Activated CD8-positive, alpha-beta T cell treated with anti-CD3 and anti-CD28 coated beads, Interleukin-2, amount 10 ng/mL, durations not matched to agents 7 days and 5 days (primary cell): ENCODE measurements at regions of chr12 and their contacts with region 1.

Region 1: DNA sequence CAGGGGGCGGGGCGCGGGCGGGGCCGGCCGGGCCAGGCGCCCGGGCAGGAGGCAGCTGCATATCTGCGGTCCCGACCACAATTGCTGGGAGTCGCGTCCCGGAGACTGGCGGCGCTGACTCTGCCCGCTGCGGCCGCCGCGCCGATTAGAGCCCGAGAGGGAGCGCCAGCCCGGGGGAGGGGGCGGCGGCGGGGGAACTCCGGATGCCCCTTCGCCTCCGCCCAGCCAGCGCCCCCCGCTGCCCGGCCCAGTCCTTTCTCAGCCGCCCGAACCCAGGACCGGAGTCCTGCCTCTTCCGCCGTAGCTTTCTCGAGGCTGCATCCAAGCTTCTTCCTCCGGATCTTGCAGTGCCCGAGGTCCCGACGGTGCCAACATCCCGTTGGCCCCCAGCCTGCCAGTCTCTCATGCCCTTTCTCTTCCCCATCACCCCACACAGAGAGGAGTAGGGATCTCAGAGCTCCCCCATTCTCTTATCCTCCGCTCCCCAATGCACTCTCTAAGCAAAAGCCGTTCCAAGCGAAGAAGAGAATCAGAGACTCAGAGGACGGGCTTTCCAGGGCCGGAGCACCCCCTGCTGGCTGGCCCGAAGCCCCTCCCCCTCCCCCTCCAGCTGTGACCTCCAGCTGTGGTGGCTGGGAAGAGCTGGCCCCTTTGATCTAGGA is 8.8 kb upstream of the SP7 start:
- DNase-seq: peak; percentile 78
- ATAC-seq: peak; percentile 85
- H3K4me3 Mint-ChIP-seq: peak overlapping the region; percentile 92
- H3K27ac Mint-ChIP-seq: peak overlapping the region; percentile 91
- H3K4me1 Mint-ChIP-seq: peaks cover 17% of the 10 kb centered on the region
- H3K27me3 Mint-ChIP-seq: peaks cover 9% of the 10 kb centered on the region

Region 2: DNA sequence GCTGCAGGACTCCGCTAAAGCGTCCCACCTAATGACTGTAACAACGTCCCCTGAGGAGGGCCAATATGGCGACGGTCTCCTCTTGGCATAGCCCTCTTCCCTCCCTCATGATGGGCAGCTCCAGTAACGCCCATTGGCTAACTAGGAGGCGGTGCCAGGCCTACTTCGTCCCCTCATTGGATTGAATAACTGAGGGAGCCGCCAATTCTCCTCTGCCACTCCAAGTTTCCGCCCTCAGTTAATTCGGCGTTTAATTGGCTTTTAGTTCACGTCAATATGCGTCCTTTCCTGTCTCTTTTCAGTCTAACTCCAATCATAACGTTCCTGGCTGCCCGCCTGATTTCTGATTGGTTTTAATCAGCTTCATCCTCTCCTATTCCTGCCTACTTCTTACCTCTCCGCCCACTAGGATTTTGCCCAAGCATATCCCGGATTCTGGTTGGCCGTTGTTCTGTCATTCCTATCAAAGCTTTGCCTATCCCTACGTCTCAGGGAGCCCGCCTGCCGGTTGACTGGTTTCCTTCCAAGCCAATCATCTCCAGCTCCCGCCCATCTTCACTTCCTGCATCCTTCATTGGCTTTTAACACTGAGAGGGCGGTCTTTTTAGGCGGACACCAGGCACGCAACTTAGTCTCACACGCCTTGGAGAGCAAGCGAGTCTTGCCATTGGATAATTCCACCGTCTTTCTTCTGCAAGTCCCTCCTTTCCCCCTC is 34.6 kb after region 1 on chr12:
- CTCF ChIA-PET with region 1: interaction called, 15 read pairs
- POLR2A ChIA-PET with region 1: interaction called, 7 read pairs
- DNase-seq: peak; percentile 99
- ATAC-seq: peak; percentile 80
- H3K4me3 Mint-ChIP-seq: no peak overlapping the region
- H3K27ac Mint-ChIP-seq: no peak overlapping the region
- H3K4me1 Mint-ChIP-seq: peaks cover 35% of the 10 kb centered on the region
- H3K27me3 Mint-ChIP-seq: no peaks in the 10 kb centered on the region

Region 3: DNA sequence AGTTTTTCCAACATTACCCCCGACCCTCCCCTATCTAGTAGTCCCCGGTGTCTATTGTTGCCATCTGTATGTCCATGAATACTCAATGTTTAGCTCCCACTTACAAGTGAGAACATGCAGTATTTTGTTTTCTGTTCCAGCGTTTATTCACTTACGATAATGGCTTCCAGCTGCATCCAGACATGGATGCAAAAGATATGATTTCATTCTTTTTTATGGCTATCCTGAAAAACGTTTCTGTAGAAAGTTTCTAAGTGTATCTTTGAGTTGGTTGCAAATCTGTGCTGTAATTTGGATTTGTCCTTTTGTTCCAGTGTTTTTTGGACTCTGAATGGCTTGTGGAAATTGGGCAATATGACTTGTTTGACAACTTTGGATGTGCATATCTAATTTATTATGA is 46.8 kb after region 1 on chr12:
- CTCF ChIA-PET with region 1: interaction called, 10 read pairs
- POLR2A ChIA-PET with region 1: interaction called, 3 read pairs
- DNase-seq: no peak
- ATAC-seq: no peak
- H3K4me3 Mint-ChIP-seq: no peak overlapping the region
- H3K27ac Mint-ChIP-seq: no peak overlapping the region
- H3K4me1 Mint-ChIP-seq: peaks cover 36% of the 10 kb centered on the region
- H3K27me3 Mint-ChIP-seq: no peaks in the 10 kb centered on the region

Region 4: GRCh38 chr12:53402871-53403270 is 57.9 kb after region 1 on chr12:
- CTCF ChIA-PET with region 1: no interaction called
- POLR2A ChIA-PET with region 1: no interaction called
- DNase-seq: no peak
- ATAC-seq: no peak
- H3K4me3 Mint-ChIP-seq: no peak overlapping the region
- H3K27ac Mint-ChIP-seq: no peak overlapping the region
- H3K4me1 Mint-ChIP-seq: peaks cover 8% of the 10 kb centered on the region
- H3K27me3 Mint-ChIP-seq: no peaks in the 10 kb centered on the region

Region 5: DNA sequence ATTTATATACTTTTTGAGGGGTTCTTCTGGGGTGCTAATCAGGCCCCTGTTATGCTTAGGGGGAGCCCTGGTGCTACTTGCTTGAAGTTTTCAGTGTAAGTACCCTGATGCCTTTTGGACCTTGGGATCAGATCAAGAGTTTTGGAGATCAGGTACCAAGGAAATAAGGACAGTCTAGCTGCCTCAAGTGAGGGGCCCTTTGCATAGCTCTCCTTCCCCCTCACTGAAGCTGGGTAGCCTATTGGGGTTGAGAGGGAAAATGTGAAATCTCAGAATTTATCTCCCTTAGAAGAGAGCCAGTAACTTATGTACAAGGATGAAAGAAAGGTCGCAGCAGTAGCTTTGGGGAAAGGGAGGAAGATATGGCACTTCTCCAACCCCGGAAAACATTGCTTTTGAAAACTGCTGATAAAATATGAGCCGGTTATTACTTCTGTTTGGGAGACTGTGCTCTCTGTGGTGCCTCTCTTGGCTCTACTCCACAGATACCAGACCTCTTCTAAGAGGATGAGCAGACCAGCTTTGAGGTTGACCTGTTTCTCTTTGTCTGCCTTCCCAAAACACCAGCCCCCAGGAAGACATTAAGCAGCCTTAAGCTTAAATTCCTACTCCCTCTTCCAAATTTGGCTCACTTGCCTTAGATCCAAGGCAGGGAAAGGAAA is 69.9 kb after region 1 on chr12:
- CTCF ChIA-PET with region 1: interaction called, 36 read pairs
- POLR2A ChIA-PET with region 1: no interaction called
- DNase-seq: no peak
- ATAC-seq: no peak
- H3K4me3 Mint-ChIP-seq: no peak overlapping the region
- H3K27ac Mint-ChIP-seq: no peak overlapping the region
- H3K4me1 Mint-ChIP-seq: peaks cover 24% of the 10 kb centered on the region
- H3K27me3 Mint-ChIP-seq: no peaks in the 10 kb centered on the region

Region 6: GRCh38 chr12:53459097-53459496 is 114.1 kb after region 1 on chr12:
- CTCF ChIA-PET with region 1: no interaction called
- POLR2A ChIA-PET with region 1: no interaction called
- DNase-seq: no peak
- ATAC-seq: no peak
- H3K4me3 Mint-ChIP-seq: no peak overlapping the region
- H3K27ac Mint-ChIP-seq: no peak overlapping the region
- H3K4me1 Mint-ChIP-seq: peaks cover 38% of the 10 kb centered on the region
- H3K27me3 Mint-ChIP-seq: no peaks in the 10 kb centered on the region

Region 7: DNA sequence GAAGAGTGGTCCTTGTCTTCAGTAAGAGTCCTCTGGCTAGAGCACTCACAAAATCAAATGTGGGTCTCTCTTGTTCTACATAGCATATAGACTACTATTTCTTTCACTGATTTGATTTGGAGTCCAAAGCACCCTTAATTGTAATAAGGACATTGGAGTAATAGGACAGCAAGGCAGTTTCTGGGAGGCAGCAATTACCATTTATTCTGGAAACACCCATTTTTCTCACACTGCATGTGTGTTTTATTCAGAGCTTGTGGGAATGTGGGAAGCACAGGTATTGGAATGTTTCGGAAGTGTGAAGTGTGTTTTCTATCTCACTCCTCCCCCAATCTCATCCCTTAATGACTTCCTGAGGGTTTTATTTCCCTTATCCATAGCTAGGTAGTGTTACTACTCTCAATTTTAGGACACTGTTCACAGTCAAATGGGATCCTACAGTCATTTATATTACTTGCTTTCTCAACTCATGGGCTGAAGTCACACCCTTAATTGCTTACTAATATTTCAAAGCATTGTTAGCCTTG is 127.2 kb after region 1 on chr12:
- CTCF ChIA-PET with region 1: no interaction called
- POLR2A ChIA-PET with region 1: no interaction called
- DNase-seq: no peak
- ATAC-seq: no peak
- H3K4me3 Mint-ChIP-seq: no peak overlapping the region
- H3K27ac Mint-ChIP-seq: no peak overlapping the region
- H3K4me1 Mint-ChIP-seq: peaks cover 52% of the 10 kb centered on the region
- H3K27me3 Mint-ChIP-seq: no peaks in the 10 kb centered on the region